ENCODE measurements at regions of chr6 and their contacts with region 1.

Region 1: DNA sequence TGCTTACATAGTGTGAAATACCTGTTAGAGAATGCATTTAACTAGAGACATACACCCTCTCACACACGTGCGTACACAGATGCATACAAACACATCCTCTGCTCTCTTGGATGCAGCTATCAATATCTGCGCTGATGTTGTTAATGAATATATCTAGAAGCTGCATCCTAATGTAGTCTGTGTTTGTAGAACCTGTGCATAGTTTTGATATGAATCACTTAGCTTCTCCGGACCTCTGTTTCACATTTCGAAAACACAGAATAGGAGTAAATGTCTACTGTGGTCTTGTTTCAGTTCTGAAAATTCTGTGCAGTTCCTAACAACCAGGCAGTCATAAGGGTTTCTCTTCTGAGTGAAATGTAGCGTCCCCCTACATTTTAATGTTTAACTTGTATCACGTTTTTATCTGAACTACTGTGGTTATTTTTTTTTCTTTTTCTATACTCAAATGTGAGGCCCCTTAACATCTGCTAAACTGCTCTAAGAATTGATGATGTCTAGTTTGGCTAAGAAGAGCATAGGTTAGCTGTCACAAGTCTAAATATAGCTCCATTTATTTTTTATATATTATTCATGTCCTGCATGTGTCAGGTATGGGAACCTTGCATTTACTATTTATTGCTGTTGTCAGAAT is 254.5 kb downstream of the TMEM242 start:
- DNase-seq: no peak
- ATAC-seq: no peak
- H3K4me3 ChIP-seq: no peak overlapping the region
- H3K4me3 Mint-ChIP-seq: peak overlapping the region in 8 of 10 donors; percentile 2 to 62 (median 41)
- H3K27ac ChIP-seq: no peak overlapping the region
- H3K27ac Mint-ChIP-seq: peak overlapping the region in 4 of 9 donors; percentile 10 to 82 (median 69)
- H3K4me1 ChIP-seq: peaks cover 4 to 11% of the 10 kb centered on the region in 2 donors
- H3K4me1 Mint-ChIP-seq: peaks cover 25 to 84% (median 76%) of the 10 kb centered on the region in 7 donors
- H3K27me3 ChIP-seq: no peaks in the 10 kb centered on the region
- H3K27me3 Mint-ChIP-seq: no peaks in the 10 kb centered on the region

Region 2: GRCh38 chr6:157087974-157088373 is 19.2 kb after region 1 on chr6:
- CTCF ChIA-PET with region 1: no interaction called
- POLR2A ChIA-PET with region 1: no interaction called
- intact Hi-C with region 1: loop called in 1 of 2 experiments (anchors 2 kb)
- DNase-seq: no peak
- ATAC-seq: no peak
- H3K4me3 ChIP-seq: no peak overlapping the region
- H3K4me3 Mint-ChIP-seq: no peak overlapping the region
- H3K27ac ChIP-seq: no peak overlapping the region
- H3K27ac Mint-ChIP-seq: peak overlapping the region in 1 of 9 donors; percentile 30
- H3K4me1 ChIP-seq: no peaks in the 10 kb centered on the region
- H3K4me1 Mint-ChIP-seq: peaks cover 7 to 51% (median 44%) of the 10 kb centered on the region in 7 donors
- H3K27me3 ChIP-seq: no peaks in the 10 kb centered on the region
- H3K27me3 Mint-ChIP-seq: no peaks in the 10 kb centered on the region

Region 3: DNA sequence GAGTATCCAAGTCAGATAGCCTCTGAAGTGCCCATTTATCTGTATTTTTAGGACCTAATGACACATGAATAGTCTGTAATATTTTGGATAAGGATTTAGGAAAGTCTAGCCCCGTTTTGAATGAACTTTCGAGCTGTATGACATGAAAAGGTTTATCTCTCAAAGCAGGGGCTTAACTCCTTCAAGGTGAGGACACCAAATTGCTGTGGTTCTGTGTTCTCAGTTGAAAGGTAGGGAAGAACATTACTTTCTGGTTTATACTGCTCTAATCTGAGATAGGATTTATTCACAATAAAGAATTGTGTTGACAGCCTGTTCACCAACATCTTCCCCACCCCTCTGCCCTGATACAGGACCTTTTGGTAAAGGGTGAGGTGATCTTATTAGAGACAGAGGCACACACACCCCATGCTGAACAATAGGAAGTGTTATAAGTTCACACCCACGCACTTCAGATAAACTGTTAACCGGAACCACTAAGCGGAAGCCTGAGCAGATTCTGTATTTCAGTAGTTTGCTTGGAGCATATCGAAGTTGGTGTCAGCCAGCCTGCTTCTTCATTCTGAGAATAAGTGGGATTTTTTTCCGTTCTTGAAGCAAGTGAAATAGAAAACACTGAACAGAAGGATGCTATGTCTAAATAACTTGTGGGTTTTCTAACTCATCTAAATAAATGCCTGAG is 31.2 kb after region 1 on chr6:
- CTCF ChIA-PET with region 1: no interaction called
- POLR2A ChIA-PET with region 1: interaction called, 3 read pairs
- intact Hi-C with region 1: loop called in 1 of 2 experiments (anchors 2 kb)
- DNase-seq: peak in 8 of 9 donors; percentile 40 to 64 (median 54)
- ATAC-seq: peak; percentile 97
- H3K4me3 ChIP-seq: peak overlapping the region; percentile 20
- H3K4me3 Mint-ChIP-seq: peak overlapping the region; percentile 8 to 89 (median 77)
- H3K27ac ChIP-seq: peak overlapping the region; percentile 60
- H3K27ac Mint-ChIP-seq: peak overlapping the region; percentile 85 to 95 (median 92)
- H3K4me1 ChIP-seq: peaks cover 22% of the 10 kb centered on the region in 2 donors
- H3K4me1 Mint-ChIP-seq: peaks cover 22 to 90% (median 79%) of the 10 kb centered on the region in 7 donors
- H3K27me3 ChIP-seq: no peaks in the 10 kb centered on the region
- H3K27me3 Mint-ChIP-seq: no peaks in the 10 kb centered on the region

Region 4: GRCh38 chr6:157893238-157893637 is 824.4 kb after region 1 on chr6:
- CTCF ChIA-PET with region 1: no interaction called
- POLR2A ChIA-PET with region 1: no interaction called
- intact Hi-C with region 1: no loop called
- DNase-seq: peak in 7 of 9 donors; percentile 60 to 84 (median 72)
- ATAC-seq: peak; percentile 81
- H3K4me3 ChIP-seq: no peak overlapping the region
- H3K4me3 Mint-ChIP-seq: peak overlapping the region in 7 of 10 donors; percentile 4 to 79 (median 31)
- H3K27ac ChIP-seq: peak overlapping the region; percentile 61
- H3K27ac Mint-ChIP-seq: peak overlapping the region in 8 of 9 donors; percentile 79 to 95 (median 92)
- H3K4me1 ChIP-seq: peaks cover 0 to 32% of the 10 kb centered on the region in 2 donors
- H3K4me1 Mint-ChIP-seq: peaks cover 20 to 64% (median 58%) of the 10 kb centered on the region in 7 donors
- H3K27me3 ChIP-seq: no peaks in the 10 kb centered on the region
- H3K27me3 Mint-ChIP-seq: peaks cover 0 to 3% (median 0%) of the 10 kb centered on the region in 5 donors